RWPE1 (cell line): ENCODE measurements at regions of chr11 and their contacts with region 1.

Region 1: GRCh38 chr11:76919887-76920746 is 59.4 kb downstream of the ACER3 start:
- DNase-seq: peak; percentile 60
- H3K27ac ChIP-seq: peak overlapping the region; percentile 41; the same call in 1 of the 2 replicates
- CTCF ChIP-seq: peak; percentile 85

Region 2: GRCh38 chr11:76721755-76722677 is 198.1 kb before region 1 on chr11:
- CTCF ChIA-PET with region 1: interaction called, 12 read pairs
- POLR2A ChIA-PET with region 1: no interaction called
- DNase-seq: peak; percentile 66
- H3K27ac ChIP-seq: no peak overlapping the region
- CTCF ChIP-seq: peak; percentile 93

Region 3: GRCh38 chr11:76734456-76735420 is 185.4 kb before region 1 on chr11:
- CTCF ChIA-PET with region 1: interaction called, 12 read pairs
- POLR2A ChIA-PET with region 1: no interaction called
- DNase-seq: no peak
- H3K27ac ChIP-seq: no peak overlapping the region
- CTCF ChIP-seq: no peak

Region 4: DNA sequence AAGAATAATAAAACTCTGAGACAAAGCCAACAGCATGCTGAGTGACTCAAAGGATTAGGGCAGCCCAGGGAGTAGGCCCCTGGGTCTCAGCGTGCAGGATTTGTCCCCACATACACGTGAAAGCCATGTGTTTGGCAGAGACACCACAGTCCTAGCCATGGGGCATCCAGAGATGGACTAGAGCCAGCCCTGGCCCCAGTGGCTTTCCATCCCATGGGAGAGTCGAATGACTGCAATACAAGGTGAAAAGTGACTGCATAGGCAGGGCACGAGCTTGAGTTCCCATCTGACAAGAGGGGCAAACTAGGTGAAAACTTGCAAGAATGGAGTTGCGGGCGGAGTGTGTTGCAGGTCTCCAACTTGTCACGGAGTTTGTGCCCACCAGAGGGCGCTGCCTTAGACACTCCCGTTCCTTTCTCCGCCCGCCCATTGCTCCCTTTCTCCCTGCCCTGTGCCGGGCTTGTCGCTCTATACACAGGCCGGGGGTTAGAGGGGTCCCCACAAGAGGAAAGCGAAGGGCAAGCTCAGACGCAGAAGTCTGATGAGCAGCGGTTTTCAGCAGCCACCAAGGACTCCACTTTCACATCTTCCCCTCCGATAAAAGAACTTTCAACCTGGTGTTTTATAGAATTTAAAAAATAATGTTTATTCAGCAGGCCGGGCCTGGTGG is 112.8 kb before region 1 on chr11:
- CTCF ChIA-PET with region 1: interaction called, 26 read pairs
- POLR2A ChIA-PET with region 1: no interaction called
- DNase-seq: no peak
- H3K27ac ChIP-seq: peak overlapping the region; percentile 66
- CTCF ChIP-seq: peak; percentile 78

Region 5: DNA sequence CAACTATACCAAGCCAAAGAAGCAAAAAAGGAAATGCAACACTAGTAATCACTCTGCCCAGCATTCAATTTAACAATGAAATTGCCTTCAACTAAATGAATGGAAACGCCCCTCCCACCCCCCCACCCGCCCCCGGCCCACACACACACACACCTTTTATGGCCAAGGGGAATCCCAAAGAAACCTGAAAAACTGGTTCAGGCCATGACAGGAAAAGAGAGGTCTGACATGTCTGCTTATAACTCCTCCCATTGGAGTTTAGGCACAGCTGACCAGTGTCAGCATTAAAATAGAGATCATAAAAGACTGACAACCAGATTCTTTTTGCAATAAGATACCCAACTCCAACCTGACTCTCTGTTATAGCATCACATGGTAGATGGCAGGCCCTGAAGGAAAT is 16.8 kb before region 1 on chr11:
- CTCF ChIA-PET with region 1: interaction called, 10 read pairs
- POLR2A ChIA-PET with region 1: no interaction called
- DNase-seq: peak; percentile 67
- H3K27ac ChIP-seq: no peak overlapping the region
- CTCF ChIP-seq: no peak

Region 6: DNA sequence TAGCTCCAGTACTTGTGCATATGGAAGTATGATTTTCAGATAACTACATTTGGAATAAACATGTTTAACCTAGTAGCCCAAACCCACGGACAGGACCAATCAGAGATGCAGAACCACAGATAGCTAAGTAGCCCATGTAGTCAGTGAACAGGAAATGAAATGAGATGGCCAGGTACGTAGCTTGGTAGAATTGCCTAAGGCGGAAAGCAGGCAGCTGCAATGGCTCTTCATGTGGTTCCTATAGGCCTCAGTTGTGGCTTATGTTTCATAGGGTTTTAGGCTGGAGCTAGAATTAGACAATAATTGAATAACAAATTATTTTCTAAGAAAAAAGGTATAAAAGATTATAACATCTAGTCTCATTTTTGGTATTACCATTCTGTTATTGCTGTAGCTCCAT is 27.7 kb after region 1 on chr11:
- CTCF ChIA-PET with region 1: no interaction called
- POLR2A ChIA-PET with region 1: no interaction called
- DNase-seq: no peak
- H3K27ac ChIP-seq: no peak overlapping the region
- CTCF ChIP-seq: no peak

Region 7: DNA sequence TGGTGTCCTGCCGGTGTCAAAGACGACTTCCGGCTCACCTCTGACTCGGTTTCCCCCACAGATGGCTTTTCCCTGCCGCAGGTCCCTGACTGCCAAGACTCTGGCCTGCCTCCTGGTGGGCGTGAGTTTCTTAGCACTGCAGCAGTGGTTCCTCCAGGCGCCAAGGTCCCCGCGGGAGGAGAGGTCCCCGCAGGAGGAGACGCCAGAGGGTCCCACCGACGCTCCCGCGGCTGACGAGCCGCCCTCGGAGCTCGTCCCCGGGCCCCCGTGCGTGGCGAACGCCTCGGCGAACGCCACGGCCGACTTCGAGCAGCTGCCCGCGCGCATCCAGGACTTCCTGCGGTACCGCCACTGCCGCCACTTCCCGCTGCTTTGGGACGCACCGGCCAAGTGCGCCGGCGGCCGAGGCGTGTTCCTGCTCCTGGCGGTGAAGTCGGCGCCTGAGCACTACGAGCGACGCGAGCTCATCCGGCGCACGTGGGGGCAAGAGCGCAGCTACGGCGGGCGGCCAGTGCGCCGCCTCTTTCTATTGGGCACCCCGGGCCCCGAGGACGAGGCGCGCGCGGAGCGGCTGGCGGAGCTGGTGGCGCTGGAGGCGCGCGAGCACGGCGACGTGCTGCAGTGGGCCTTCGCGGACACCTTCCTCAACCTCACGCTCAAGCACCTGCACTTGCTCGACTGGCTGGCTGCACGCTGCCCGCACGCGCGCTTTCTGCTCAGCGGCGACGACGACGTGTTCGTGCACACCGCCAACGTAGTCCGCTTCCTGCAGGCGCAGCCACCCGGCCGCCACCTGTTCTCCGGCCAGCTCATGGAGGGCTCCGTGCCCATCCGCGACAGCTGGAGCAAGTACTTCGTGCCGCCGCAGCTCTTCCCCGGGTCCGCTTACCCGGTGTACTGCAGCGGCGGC is 119.6 kb after region 1 on chr11:
- CTCF ChIA-PET with region 1: interaction called, 10 read pairs
- POLR2A ChIA-PET with region 1: no interaction called
- DNase-seq: peak; percentile 33
- H3K27ac ChIP-seq: no peak overlapping the region
- CTCF ChIP-seq: peak; percentile 31